A673 (cell line): ENCODE measurements at regions of chr16 and their contacts with region 1.

Region 1: GRCh38 chr16:55832758-55833540 is at the start of gene CES1:
- DNase-seq: peak; percentile 87
- H3K4me3 ChIP-seq: peak within 1 kb of the TSS; percentile 72
- H3K27ac ChIP-seq: peak within 1 kb of the TSS; percentile 93
- H3K4me1 ChIP-seq: peaks cover 13% of the 10 kb centered on the region
- H3K27me3 ChIP-seq: no peaks in the 10 kb centered on the region
- CTCF ChIP-seq: no peak
- total RNA-seq, gene CES1: 523 and 625 TPM in 2 replicates

Region 2: DNA sequence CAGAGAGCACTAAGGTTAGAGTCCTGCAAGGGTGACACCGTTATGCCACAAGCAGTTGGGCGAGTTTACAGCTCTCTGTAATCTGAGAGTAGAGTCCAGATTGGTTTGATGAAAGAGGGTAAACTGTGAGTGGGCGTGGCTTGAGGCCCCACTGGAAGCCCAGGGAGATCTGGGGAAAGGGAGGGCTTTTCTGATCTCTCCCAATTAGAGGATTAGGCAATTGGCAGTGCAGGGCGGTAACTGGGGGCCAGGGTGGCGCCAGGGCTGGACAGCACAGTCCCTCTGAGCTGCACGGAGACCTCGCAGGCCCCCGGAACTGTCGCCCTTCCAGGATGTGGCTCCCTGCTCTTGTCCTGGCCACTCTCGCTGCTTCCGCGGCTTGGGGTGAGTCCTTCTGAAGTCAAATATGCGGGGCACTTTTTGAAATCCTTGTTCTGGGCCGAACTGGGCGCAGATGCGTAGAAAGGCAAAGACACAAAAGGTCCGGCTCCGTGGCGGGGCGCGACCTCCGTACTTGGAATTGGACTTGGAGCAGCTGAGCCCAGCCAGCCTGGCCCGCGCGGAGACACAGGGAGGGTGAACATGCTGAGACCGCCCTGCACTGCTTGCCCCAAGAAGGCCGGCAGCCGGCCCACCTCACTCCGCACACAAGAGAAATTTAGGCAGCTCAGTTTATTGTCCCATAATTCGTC is 72.5 kb before region 1 on chr16:
- CTCF ChIA-PET with region 1: no interaction called
- POLR2A ChIA-PET with region 1: no interaction called
- intact Hi-C with region 1: loop called (anchors 2 kb)
- DNase-seq: no peak
- H3K4me3 ChIP-seq: no peak overlapping the region
- H3K27ac ChIP-seq: no peak overlapping the region
- H3K4me1 ChIP-seq: no peaks in the 10 kb centered on the region
- H3K27me3 ChIP-seq: no peaks in the 10 kb centered on the region
- CTCF ChIP-seq: no peak